PC-3 (cell line): ENCODE measurements at regions of chr20 and their contacts with region 1.

Region 1: GRCh38 chr20:32263398-32263954 is 14.0 kb upstream of the KIF3B start:
- DNase-seq: peak; percentile 75
- ATAC-seq: peak; percentile 81
- H3K4me3 ChIP-seq: no peak overlapping the region
- H3K27ac ChIP-seq: no peak overlapping the region
- H3K4me1 ChIP-seq: peaks cover 7% of the 10 kb centered on the region
- H3K27me3 ChIP-seq: no peaks in the 10 kb centered on the region
- CTCF ChIP-seq: no peak

Region 2: GRCh38 chr20:32240220-32240619 is 23.3 kb before region 1 on chr20:
- CTCF ChIA-PET with region 1: no interaction called
- POLR2A ChIA-PET with region 1: no interaction called
- intact Hi-C with region 1: no loop called
- DNase-seq: peak; percentile 8
- ATAC-seq: no peak
- H3K4me3 ChIP-seq: no peak overlapping the region
- H3K27ac ChIP-seq: no peak overlapping the region
- H3K4me1 ChIP-seq: peaks cover 20% of the 10 kb centered on the region
- H3K27me3 ChIP-seq: no peaks in the 10 kb centered on the region
- CTCF ChIP-seq: no peak

Region 3: GRCh38 chr20:32325706-32326503 is 62.4 kb after region 1 on chr20:
- CTCF ChIA-PET with region 1: no interaction called
- POLR2A ChIA-PET with region 1: no interaction called
- intact Hi-C with region 1: loop called (anchors 2 kb)
- DNase-seq: peak; percentile 96
- ATAC-seq: peak; percentile 99
- H3K4me3 ChIP-seq: peak overlapping the region; percentile 6; the same call in 1 of the 2 replicates
- H3K27ac ChIP-seq: peak overlapping the region; percentile 92
- H3K4me1 ChIP-seq: peaks cover 11% of the 10 kb centered on the region
- H3K27me3 ChIP-seq: no peaks in the 10 kb centered on the region
- CTCF ChIP-seq: no peak

Region 4: DNA sequence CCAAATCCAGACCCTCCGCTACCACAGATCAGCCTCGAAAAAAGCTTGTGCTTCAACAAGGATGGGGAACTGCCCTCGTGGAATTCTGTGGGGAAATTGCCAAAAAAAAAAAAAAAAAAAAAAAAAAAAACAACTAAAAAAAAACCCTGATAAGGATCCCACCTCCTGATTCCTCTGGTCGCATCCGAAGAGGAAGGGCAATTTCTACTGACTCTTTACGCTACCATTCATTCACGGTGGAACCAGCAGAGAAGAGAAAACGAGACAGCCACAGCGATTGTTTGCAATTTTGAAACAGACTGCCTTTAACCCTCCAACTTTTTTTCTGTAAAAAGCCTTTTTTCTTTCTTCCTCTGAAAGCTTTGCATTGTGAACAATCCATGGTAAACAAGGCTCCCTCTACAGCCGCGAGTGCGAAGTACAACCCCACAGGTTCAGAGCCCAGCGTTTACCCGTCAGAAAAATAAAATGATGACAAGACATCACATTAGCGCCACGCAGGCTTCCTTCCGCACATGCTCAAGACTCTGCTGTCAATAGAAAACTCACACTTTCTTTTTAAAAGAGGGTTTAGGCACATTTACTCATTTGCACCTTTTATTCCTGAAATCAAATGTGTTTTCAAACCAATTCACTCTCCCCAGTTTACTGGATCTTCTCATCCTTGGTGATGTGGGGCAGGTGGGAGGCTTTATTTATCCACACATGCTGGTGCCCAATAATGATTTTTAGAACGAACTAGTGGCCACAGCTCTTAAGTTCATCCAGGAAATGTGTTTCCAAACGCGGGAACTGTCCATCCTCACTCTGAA is 221.7 kb after region 1 on chr20:
- CTCF ChIA-PET with region 1: no interaction called
- POLR2A ChIA-PET with region 1: no interaction called
- intact Hi-C with region 1: no loop called
- DNase-seq: peak; percentile 82
- ATAC-seq: peak; percentile 54
- H3K4me3 ChIP-seq: peak overlapping the region; percentile 85
- H3K27ac ChIP-seq: no peak overlapping the region
- H3K4me1 ChIP-seq: peaks cover 11% of the 10 kb centered on the region
- H3K27me3 ChIP-seq: no peaks in the 10 kb centered on the region
- CTCF ChIP-seq: peak; percentile 83